ENCODE measurements at regions of chrX and their contacts with region 1.

Region 1: DNA sequence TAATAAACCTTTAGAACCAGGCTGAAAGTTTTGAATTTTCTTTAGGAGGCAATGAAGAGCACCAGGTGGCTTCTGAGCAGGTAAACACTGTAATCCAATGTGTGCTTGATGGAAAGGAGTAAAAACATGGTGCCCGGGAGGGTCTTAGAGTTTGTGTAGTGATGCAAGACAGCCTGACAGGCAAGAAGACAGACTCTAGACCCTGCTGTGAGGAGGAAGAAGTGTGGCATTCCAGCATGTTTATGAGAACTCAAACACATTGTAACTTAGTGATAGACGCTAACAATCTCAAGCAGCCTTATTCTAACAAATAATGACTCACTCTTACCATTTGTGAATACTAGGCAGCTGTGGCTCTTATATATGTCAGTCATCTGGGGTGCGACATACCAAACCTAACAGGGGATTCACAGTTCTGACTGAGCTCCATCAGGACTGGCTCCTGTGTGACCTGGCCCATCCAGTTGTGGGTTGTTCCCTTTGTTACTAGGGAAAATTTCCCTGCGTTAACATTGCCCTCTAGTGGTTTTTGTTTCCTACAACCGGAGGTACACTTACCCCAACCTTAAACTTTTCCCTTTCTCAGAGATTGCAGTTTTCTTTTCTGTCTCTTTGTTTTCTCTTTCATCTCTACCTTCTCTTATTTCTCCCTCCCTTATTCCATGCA is 53.8 kb downstream of the VSIG4 start:
- DNase-seq: peak; percentile 12
- H3K4me3 ChIP-seq: no peak overlapping the region
- H3K27ac ChIP-seq: no peak overlapping the region
- H3K4me1 ChIP-seq: peaks cover 0 to 4% (median 0%) of the 10 kb centered on the region in 4 donors
- H3K27me3 ChIP-seq: no peaks in the 10 kb centered on the region
- CTCF ChIP-seq: peak; percentile 41 to 62 (median 51)
- EP300 ChIP-seq: no peak
- POLR2A ChIP-seq: no peak

Region 2: DNA sequence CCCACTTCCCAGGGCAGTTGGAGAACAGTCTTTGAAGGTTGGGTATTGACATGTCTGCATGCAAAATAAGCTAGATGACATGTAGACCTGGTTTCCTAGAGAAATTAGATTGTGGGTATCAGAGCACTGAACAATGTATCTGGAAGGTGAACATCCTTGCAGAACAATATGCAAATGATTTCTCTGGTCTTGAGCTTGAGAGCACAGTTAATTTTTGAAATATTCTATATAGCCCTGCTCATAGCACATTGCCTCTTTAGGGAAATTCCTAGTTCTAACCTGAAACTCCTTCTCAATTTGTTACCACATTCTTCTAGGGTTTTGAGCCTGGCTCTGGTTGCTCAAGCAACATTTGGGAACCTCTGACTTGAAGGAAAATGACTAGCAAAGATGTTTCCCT is 409.9 kb before region 1 on chrX:
- in situ Hi-C with region 1: loop called (anchors 10 to 25 kb)
- intact Hi-C with region 1: loop called (anchors 2 kb)
- DNase-seq: no peak
- H3K4me3 ChIP-seq: no peak overlapping the region
- H3K27ac ChIP-seq: no peak overlapping the region
- H3K4me1 ChIP-seq: no peaks in the 10 kb centered on the region
- H3K27me3 ChIP-seq: no peaks in the 10 kb centered on the region
- CTCF ChIP-seq: no peak
- EP300 ChIP-seq: no peak
- POLR2A ChIP-seq: no peak

Region 3: GRCh38 chrX:65581661-65582339 is 404.3 kb before region 1 on chrX:
- in situ Hi-C with region 1: loop called (anchors 10 to 25 kb)
- intact Hi-C with region 1: loop called (anchors 2 kb)
- DNase-seq: peak; percentile 70
- H3K4me3 ChIP-seq: no peak overlapping the region
- H3K27ac ChIP-seq: no peak overlapping the region
- H3K4me1 ChIP-seq: peaks cover 0 to 5% (median 0%) of the 10 kb centered on the region in 4 donors
- H3K27me3 ChIP-seq: no peaks in the 10 kb centered on the region
- CTCF ChIP-seq: peak; percentile 62 to 72 (median 67)
- EP300 ChIP-seq: no peak
- POLR2A ChIP-seq: no peak

Region 4: GRCh38 chrX:65595460-65595876 is 390.6 kb before region 1 on chrX:
- in situ Hi-C with region 1: loop called in 2 of 4 experiments (anchors 25 kb)
- intact Hi-C with region 1: no loop called
- DNase-seq: peak; percentile 98
- H3K4me3 ChIP-seq: no peak overlapping the region
- H3K27ac ChIP-seq: peak overlapping the region; percentile 75 to 81 (median 77)
- H3K4me1 ChIP-seq: peaks cover 0 to 11% (median 7%) of the 10 kb centered on the region in 4 donors
- H3K27me3 ChIP-seq: no peaks in the 10 kb centered on the region
- CTCF ChIP-seq: peak; percentile 89 to 99 (median 95)
- EP300 ChIP-seq: no peak
- POLR2A ChIP-seq: no peak

Region 5: GRCh38 chrX:65745992-65746391 is 240.1 kb before region 1 on chrX:
- in situ Hi-C with region 1: loop called in 2 of 4 experiments (anchors 25 kb)
- intact Hi-C with region 1: no loop called
- DNase-seq: peak; percentile 34
- H3K4me3 ChIP-seq: no peak overlapping the region
- H3K27ac ChIP-seq: no peak overlapping the region
- H3K4me1 ChIP-seq: no peaks in the 10 kb centered on the region
- H3K27me3 ChIP-seq: no peaks in the 10 kb centered on the region
- CTCF ChIP-seq: peak; percentile 9 to 38 (median 24)
- EP300 ChIP-seq: no peak
- POLR2A ChIP-seq: no peak

Region 6: DNA sequence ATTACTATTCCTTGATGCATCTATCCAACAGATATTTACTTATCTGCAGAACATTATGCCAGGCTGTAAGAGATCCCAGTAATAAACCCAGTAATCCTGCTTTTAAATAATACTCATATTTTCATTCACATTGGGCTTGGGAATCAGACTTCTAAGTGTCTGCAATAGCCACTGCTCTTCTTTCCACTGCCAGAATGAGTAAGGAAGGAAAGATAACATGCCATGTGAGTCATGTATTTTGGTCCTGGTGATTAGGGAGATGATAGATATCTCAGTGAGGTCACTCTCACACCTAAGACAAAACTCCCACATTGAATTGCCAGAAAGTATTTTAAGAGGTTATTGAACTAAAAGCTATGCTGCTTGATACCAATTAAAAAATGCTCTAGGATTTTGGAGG is 164.1 kb after region 1 on chrX:
- in situ Hi-C with region 1: no loop called
- intact Hi-C with region 1: no loop called
- DNase-seq: no peak
- H3K4me3 ChIP-seq: no peak overlapping the region
- H3K27ac ChIP-seq: no peak overlapping the region
- H3K4me1 ChIP-seq: no peaks in the 10 kb centered on the region
- H3K27me3 ChIP-seq: no peaks in the 10 kb centered on the region
- CTCF ChIP-seq: no peak
- EP300 ChIP-seq: no peak
- POLR2A ChIP-seq: no peak

Measured in transverse colon (tissue), 4 donors.